ENCODE measurements at regions of chr10 and their contacts with region 1.

Region 1: GRCh38 chr10:52027055-52027705 is 286.9 kb upstream of the DKK1 start:
- DNase-seq: no peak
- H3K4me3 ChIP-seq: no peak overlapping the region
- H3K27ac ChIP-seq: no peak overlapping the region
- H3K4me1 ChIP-seq: peaks cover 0 to 6% of the 10 kb centered on the region in 2 donors
- H3K27me3 ChIP-seq: no peaks in the 10 kb centered on the region
- CTCF ChIP-seq: no peak

Region 2: DNA sequence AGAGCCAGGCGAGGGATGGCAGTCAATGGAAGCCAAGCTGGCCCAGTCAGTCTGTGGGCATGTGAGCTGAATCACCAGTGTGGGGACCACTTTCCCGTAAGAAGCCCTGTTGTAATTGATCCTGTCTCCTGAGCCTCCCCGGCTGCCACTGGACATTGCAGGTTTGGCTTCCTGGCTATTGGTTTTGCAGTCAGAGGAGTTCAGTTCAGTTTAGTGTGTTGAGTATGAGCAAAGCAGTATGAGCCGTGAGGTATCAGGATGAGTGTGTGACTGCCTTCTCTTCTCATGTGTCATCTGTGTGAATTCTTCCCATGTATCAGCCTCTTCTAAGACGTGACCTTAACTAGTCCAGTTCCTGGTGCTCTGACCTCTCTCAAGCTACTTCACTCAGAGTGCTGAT is 725.5 kb before region 1 on chr10:
- intact Hi-C with region 1: no loop called
- DNase-seq: peak in 1 of 2 donors; percentile 74
- H3K4me3 ChIP-seq: no peak overlapping the region
- H3K27ac ChIP-seq: peak overlapping the region; percentile 82 to 84
- H3K4me1 ChIP-seq: peaks cover 4 to 67% of the 10 kb centered on the region in 2 donors
- H3K27me3 ChIP-seq: no peaks in the 10 kb centered on the region
- CTCF ChIP-seq: no peak

Region 3: DNA sequence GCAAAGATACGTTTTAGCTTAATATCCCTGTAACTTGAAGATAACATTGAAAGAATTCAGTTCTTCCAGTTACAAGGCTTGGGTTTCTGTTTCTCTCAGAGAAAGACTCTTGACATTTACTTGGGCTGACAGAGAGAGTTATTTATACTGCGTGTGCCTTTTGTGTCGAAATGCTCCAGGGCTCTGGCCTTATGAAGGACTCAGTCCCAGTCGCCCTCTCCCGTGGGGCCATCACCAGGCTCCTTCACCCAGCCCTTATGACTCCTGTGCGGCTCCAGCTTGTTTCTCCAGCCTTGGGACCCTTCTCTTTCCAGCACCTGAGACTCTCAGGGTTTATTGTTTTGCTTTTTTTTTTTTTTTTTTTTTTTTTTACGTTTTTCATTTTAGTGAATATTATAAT is 44.6 kb after region 1 on chr10:
- intact Hi-C with region 1: loop called (anchors 5 kb)
- DNase-seq: no peak
- H3K4me3 ChIP-seq: no peak overlapping the region
- H3K27ac ChIP-seq: peak overlapping the region in 1 of 2 donors; percentile 40
- H3K4me1 ChIP-seq: peaks cover 0 to 8% of the 10 kb centered on the region in 2 donors
- H3K27me3 ChIP-seq: no peaks in the 10 kb centered on the region
- CTCF ChIP-seq: no peak